ENCODE measurements at regions of chr2 and their contacts with region 1.

Region 1: DNA sequence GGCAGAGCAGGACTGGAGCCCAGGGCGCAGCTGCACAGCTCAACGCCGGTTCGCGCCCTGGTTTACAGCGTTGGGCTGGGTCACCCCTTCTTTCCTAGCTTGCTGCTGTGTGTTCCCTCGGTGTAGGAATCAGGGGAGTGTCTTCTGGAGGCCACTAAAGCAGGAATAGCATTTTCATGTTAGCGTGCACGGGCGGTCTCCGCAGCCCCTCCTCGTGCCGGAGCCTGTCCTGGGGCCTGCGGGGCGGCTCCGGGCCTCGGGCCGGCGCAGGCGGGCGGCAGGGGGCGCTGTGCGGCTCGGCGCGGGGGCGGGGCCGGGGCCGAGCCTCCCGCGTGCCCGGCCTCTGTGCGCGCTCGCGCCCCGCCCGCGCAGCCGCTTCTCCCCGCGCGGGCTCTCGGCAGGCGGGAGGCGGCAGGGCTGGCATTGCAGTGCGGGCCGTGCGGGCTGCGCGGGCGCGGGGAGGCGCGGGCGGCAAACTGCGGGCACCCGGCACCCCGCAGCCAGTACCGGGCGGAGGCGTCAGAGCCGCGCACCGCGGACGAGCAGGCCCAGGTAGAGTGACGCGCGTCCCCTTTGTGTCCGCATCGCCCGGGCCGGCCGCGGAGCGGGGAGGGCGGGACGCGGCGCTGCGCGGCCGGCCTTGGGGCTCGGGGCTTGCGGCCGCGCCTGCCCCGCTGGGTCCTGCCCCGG is at the start of gene RNF144A:
- DNase-seq: peak; percentile 51 to 74
- H3K4me3 ChIP-seq: peak within 1 kb of the TSS; percentile 43 to 94
- H3K27ac ChIP-seq: peak within 1 kb of the TSS; percentile 86
- H3K4me1 ChIP-seq: peaks cover 0 to 11% of the 10 kb centered on the region in 2 donors
- H3K27me3 ChIP-seq: no peaks in the 10 kb centered on the region
- CTCF ChIP-seq: peak; percentile 21 to 77 (median 62)
- POLR2A ChIP-seq: peak; percentile 41 to 68
- total RNA-seq, gene RNF144A: 22.5 to 103 (median 63.0) TPM

Region 2: GRCh38 chr2:7037340-7038333 is 120.4 kb after region 1 on chr2:
- intact Hi-C with region 1: loop called (anchors 10 kb)
- DNase-seq: peak; percentile 68 to 72
- H3K4me3 ChIP-seq: no peak overlapping the region
- H3K27ac ChIP-seq: no peak overlapping the region
- H3K4me1 ChIP-seq: no peaks in the 10 kb centered on the region
- H3K27me3 ChIP-seq: no peaks in the 10 kb centered on the region
- CTCF ChIP-seq: peak; percentile 58 to 68 (median 62)
- POLR2A ChIP-seq: no peak

Measured in uterus (tissue), 4 donors.